Heart left ventricle (tissue), 16 donors: ENCODE measurements at regions of chr18 and their contacts with region 1.

Region 1: GRCh38 chr18:55422456-55423180 is 165.4 kb downstream of the TCF4 start:
- DNase-seq: peak; percentile 47 to 78 (median 62)
- ATAC-seq: peak in 3 of 4 donors; percentile 16 to 67 (median 65)
- H3K4me3 ChIP-seq: peak overlapping the region; percentile 5 to 56 (median 44)
- H3K27ac ChIP-seq: peak overlapping the region; percentile 33 to 91 (median 84)
- H3K4me1 ChIP-seq: peaks cover 0 to 36% (median 9%) of the 10 kb centered on the region in 12 donors
- H3K27me3 ChIP-seq: no peaks in the 10 kb centered on the region
- CTCF ChIP-seq: no peak
- POLR2A ChIP-seq: no peak

Region 2: DNA sequence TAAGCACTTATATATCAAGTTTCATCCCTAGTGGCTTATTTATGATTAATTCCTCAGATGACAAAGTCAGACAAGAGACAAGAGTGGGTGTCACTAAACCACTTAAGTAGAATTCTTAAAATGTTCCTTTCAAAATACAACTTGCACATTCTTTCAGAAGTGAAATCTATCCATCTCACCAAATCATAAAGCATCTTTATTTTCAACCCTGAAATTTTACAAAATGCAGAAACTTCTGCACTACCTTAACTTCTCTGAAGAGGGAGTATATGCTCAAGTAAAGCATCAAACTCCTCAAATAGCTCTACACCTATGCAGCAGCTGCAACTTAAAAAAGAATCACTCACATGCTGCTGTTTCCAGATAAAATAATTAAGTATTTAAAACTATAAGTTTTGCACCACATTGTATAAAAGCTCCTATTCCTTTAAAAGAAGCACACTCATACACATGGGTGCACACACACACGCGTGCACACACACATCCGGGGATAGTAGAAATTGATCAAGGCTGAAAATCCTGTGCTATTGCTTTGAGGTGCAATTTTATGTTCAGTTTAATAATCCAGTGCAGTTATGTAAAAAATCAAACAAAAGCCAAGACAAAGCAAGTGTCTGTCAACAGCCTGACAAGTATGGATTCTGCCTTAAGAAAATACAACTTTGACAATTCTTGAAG is 79.1 kb before region 1 on chr18:
- intact Hi-C with region 1: loop called in 2 of 10 experiments (anchors 5 to 10 kb)
- DNase-seq: no peak
- ATAC-seq: peak in 3 of 4 donors; percentile 56 to 64 (median 57)
- H3K4me3 ChIP-seq: no peak overlapping the region
- H3K27ac ChIP-seq: peak overlapping the region in 2 of 12 donors; percentile 4 to 21
- H3K4me1 ChIP-seq: peaks cover 0 to 61% (median 17%) of the 10 kb centered on the region in 12 donors
- H3K27me3 ChIP-seq: no peaks in the 10 kb centered on the region
- CTCF ChIP-seq: peak; percentile 38 to 74 (median 58)
- POLR2A ChIP-seq: no peak

Region 3: DNA sequence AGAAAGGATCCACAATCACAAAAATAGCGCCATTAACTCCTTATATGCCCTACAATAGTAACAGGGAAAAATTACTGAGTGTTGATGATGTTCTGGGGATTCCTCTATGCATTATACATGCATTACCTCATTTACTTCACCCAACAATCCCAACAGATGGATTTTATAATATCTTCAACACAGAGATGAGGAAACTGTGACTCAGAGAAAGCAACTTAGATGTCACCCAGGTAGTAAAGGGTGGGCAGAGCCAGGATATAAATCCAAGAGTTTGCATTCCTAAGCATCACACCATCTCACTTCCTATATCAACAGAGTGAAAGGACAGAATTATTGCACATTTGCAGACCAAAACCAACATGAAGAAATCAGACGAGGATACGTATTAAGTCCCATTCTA is 21.2 kb after region 1 on chr18:
- intact Hi-C with region 1: no loop called
- DNase-seq: no peak
- ATAC-seq: no peak
- H3K4me3 ChIP-seq: no peak overlapping the region
- H3K27ac ChIP-seq: no peak overlapping the region
- H3K4me1 ChIP-seq: peaks cover 0 to 47% (median 9%) of the 10 kb centered on the region in 12 donors
- H3K27me3 ChIP-seq: no peaks in the 10 kb centered on the region
- CTCF ChIP-seq: no peak
- POLR2A ChIP-seq: no peak

Region 4: GRCh38 chr18:55465313-55465712 is 42.7 kb after region 1 on chr18:
- intact Hi-C with region 1: loop called in 2 of 10 experiments (anchors 5 to 10 kb)
- DNase-seq: no peak
- ATAC-seq: peak in 1 of 4 donors; percentile 24
- H3K4me3 ChIP-seq: peak overlapping the region in 1 of 12 donors; percentile 1
- H3K27ac ChIP-seq: peak overlapping the region in 4 of 12 donors; percentile 13 to 56 (median 32)
- H3K4me1 ChIP-seq: peaks cover 0 to 26% (median 6%) of the 10 kb centered on the region in 12 donors
- H3K27me3 ChIP-seq: no peaks in the 10 kb centered on the region
- CTCF ChIP-seq: no peak
- POLR2A ChIP-seq: no peak

Region 5: GRCh38 chr18:55477499-55477859 is 54.9 kb after region 1 on chr18:
- intact Hi-C with region 1: loop called in 1 of 10 experiments (anchors 10 kb)
- DNase-seq: no peak
- ATAC-seq: peak; percentile 45 to 86 (median 74)
- H3K4me3 ChIP-seq: peak overlapping the region; percentile 5 to 62 (median 49)
- H3K27ac ChIP-seq: peak overlapping the region; percentile 45 to 89 (median 82)
- H3K4me1 ChIP-seq: peaks cover 0 to 44% (median 11%) of the 10 kb centered on the region in 12 donors
- H3K27me3 ChIP-seq: no peaks in the 10 kb centered on the region
- CTCF ChIP-seq: peak in 4 of 12 donors; percentile 9 to 34 (median 12)
- POLR2A ChIP-seq: no peak

Region 6: GRCh38 chr18:55500316-55501086 is 77.9 kb after region 1 on chr18:
- intact Hi-C with region 1: loop called in 4 of 10 experiments (anchors 5 to 10 kb)
- DNase-seq: no peak
- ATAC-seq: peak in 3 of 4 donors; percentile 42 to 87 (median 74)
- H3K4me3 ChIP-seq: peak overlapping the region in 2 of 12 donors; percentile 3 to 15
- H3K27ac ChIP-seq: peak overlapping the region; percentile 17 to 68 (median 40)
- H3K4me1 ChIP-seq: peaks cover 0 to 44% (median 22%) of the 10 kb centered on the region in 12 donors
- H3K27me3 ChIP-seq: no peaks in the 10 kb centered on the region
- CTCF ChIP-seq: no peak
- POLR2A ChIP-seq: no peak

Region 7: DNA sequence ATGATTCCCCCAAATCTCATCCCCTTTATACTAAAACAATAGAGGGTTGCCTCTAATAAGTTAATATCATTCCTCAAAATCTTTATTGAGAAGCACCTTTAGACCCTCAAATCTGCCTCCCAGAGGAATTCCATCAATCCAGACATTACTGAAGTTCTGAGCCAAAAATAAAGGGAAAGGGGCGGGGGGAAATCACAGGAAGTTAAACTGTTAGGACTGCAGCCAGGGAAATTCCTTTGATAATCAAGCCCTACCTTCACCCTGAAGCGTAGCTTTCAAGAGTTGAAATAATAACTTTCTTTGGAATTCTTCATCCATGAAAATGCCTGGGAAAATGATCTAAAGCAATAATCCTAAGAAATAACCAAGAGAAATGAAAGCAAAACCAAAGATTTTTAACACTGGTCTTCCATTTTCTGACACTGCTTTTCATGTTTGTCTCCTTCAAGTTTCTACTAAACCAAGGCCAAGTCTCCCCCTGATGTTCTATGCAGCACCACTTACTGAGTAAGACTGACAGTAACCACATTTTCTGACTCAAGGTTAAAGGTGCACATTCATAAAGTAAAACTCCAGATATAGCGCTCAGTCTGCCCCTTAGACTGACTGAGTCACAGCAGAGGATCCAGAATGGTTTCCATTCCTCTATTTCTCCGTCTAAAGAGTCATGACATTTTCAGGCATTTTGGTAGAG is 87.2 kb after region 1 on chr18:
- intact Hi-C with region 1: loop called in 7 of 10 experiments (anchors 2 to 10 kb)
- DNase-seq: peak in 2 of 5 donors; percentile 40 to 63
- ATAC-seq: peak in 2 of 4 donors; percentile 45 to 64
- H3K4me3 ChIP-seq: peak overlapping the region in 11 of 12 donors; percentile 1 to 50 (median 34)
- H3K27ac ChIP-seq: peak overlapping the region; percentile 52 to 94 (median 86)
- H3K4me1 ChIP-seq: peaks cover 0 to 55% (median 18%) of the 10 kb centered on the region in 12 donors
- H3K27me3 ChIP-seq: no peaks in the 10 kb centered on the region
- CTCF ChIP-seq: no peak
- POLR2A ChIP-seq: no peak